Esophagus squamous epithelium (tissue), 5 donors: ENCODE measurements at regions of chr6 and their contacts with region 1.

Region 1: DNA sequence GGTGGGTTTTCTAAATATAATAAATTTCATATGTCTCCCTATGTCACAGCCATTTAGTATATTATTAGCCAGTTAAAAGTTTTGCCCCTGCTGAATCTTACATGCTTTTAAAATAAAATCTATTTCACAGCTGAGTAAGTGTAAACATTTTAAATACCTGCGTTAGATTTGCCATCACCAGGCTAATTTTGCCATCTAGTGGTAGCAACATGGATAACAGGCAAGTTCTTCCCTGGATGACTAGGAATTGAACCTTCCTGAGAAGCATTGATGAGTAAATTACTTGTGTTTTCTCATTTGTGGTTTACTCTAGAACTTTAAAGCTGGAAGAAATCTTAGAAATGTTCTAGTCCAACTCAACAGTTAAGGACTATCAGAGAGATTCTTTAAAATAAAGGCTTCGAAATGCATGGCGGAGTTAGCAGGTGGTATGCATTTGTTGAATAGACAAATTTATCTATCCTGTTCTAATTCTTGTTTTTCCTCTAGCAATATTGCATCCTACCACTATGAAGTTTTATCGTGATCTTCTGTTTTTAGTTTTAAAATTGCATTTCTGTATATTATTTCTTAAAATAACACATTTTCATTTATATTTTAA is 2.6 kb downstream of the PRSS35 start:
- DNase-seq: no peak
- H3K4me3 ChIP-seq: no peak overlapping the region
- H3K27ac ChIP-seq: no peak overlapping the region
- H3K4me1 ChIP-seq: peaks cover 0 to 14% (median 10%) of the 10 kb centered on the region in 3 donors
- H3K27me3 ChIP-seq: peaks cover 0 to 27% (median 0%) of the 10 kb centered on the region in 4 donors
- CTCF ChIP-seq: peak; percentile 25 to 85 (median 75)
- POLR2A ChIP-seq: no peak

Region 2: GRCh38 chr6:83192871-83193746 is 321.9 kb before region 1 on chr6 and contains the starts of genes PGM3 and RWDD2A:
- intact Hi-C with region 1: no loop called
- DNase-seq: peak; percentile 39
- H3K4me3 ChIP-seq: peak within 1 kb of the TSS; percentile 88 to 96 (median 92)
- H3K27ac ChIP-seq: peak within 1 kb of the TSS; percentile 81 to 91 (median 86)
- H3K4me1 ChIP-seq: peaks cover 3 to 31% (median 13%) of the 10 kb centered on the region in 3 donors
- H3K27me3 ChIP-seq: no peaks in the 10 kb centered on the region
- CTCF ChIP-seq: no peak
- POLR2A ChIP-seq: peak in 3 of 4 donors; percentile 61 to 86 (median 68)
- total RNA-seq, gene PGM3: 10.9 to 20.6 (median 16.9) TPM
- total RNA-seq, gene RWDD2A: 0.57 to 3.1 (median 0.91) TPM

Region 3: DNA sequence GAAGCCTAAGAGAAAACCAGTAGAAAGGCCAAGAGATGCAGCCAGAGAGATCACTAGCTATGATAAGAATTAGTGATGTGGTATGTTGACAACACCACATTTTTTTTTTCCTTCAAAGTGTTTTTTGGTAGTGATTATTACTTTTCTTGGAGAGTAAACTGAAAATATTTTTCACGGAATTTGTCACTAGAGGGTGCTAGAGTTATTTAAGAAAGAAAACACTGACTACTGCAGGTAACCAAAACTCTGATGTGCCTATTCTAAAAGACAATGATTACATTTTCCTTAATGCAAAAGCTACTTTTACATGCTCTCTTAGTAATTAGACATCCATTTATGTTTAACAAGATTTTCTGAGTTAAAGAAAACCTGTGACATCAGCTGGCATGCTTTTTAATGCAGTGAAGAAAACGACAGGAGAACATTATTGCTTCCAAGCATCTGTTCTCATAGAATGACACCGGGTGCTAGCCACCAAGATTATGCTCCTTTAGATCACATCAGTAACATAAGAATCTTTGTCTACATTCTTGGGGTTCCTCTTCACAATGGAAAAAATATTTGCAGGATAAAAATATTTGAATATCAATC is 293.0 kb before region 1 on chr6:
- intact Hi-C with region 1: loop called (anchors 2 kb)
- DNase-seq: no peak
- H3K4me3 ChIP-seq: no peak overlapping the region
- H3K27ac ChIP-seq: no peak overlapping the region
- H3K4me1 ChIP-seq: no peaks in the 10 kb centered on the region
- H3K27me3 ChIP-seq: no peaks in the 10 kb centered on the region
- CTCF ChIP-seq: peak in 5 of 6 experiments; percentile 24 to 47 (median 34)
- POLR2A ChIP-seq: no peak

Region 4: GRCh38 chr6:83417880-83418663 is 96.9 kb before region 1 on chr6:
- intact Hi-C with region 1: loop called (anchors 5 kb)
- DNase-seq: no peak
- H3K4me3 ChIP-seq: no peak overlapping the region
- H3K27ac ChIP-seq: no peak overlapping the region
- H3K4me1 ChIP-seq: peaks cover 0 to 8% (median 0%) of the 10 kb centered on the region in 3 donors
- H3K27me3 ChIP-seq: no peaks in the 10 kb centered on the region
- CTCF ChIP-seq: peak; percentile 19 to 69 (median 50)
- POLR2A ChIP-seq: no peak